CD4-positive, alpha-beta memory T cell (primary cell): ENCODE measurements at regions of chr6 and their contacts with region 1.

Region 1: DNA sequence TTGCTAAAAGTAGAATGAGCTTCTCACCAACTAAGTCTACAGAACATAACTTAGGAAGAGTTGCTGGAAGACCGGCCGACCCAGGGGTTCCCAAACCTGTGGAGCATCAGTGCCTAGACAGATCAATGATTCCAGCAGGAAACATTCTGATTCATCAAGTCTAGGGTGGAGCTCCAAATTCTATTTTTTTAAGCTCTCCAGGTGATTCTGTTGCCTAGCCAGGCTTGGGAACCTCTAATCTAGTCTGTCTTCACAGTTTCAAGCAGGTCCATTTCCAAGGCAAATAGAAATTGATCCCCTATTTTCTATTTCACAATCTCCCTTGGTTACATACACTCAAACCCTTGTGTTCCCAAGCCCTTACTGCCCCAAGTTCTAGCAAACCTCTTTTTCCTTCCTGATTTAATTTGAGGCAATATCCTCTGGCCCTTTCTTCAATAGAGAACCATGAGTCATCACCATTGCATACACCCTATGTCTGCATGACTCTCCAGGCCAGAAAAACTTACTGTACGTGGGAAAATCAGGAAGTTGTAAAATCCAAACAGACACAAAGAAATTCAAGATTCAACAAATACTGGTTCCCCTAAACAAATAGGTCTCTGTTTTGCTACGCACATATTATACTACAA is 8.9 kb downstream of the ATXN1 start:
- DNase-seq: no peak
- H3K4me3 ChIP-seq: no peak overlapping the region
- H3K4me3 Mint-ChIP-seq: no peak overlapping the region
- H3K27ac ChIP-seq: no peak overlapping the region
- H3K27ac Mint-ChIP-seq: no peak overlapping the region
- H3K4me1 ChIP-seq: peaks cover 80% of the 10 kb centered on the region
- H3K4me1 Mint-ChIP-seq: peaks cover 60 to 89% (median 71%) of the 10 kb centered on the region in 4 donors
- H3K27me3 ChIP-seq: no peaks in the 10 kb centered on the region
- H3K27me3 Mint-ChIP-seq: no peaks in the 10 kb centered on the region

Region 2: GRCh38 chr6:16108921-16109658 is 643.3 kb before region 1 on chr6:
- CTCF ChIA-PET with region 1: no interaction called
- POLR2A ChIA-PET with region 1: no interaction called
- intact Hi-C with region 1: no loop called
- DNase-seq: no peak
- H3K4me3 ChIP-seq: no peak overlapping the region
- H3K4me3 Mint-ChIP-seq: no peak overlapping the region
- H3K27ac ChIP-seq: no peak overlapping the region
- H3K27ac Mint-ChIP-seq: no peak overlapping the region
- H3K4me1 ChIP-seq: no peaks in the 10 kb centered on the region
- H3K4me1 Mint-ChIP-seq: no peaks in the 10 kb centered on the region
- H3K27me3 ChIP-seq: no peaks in the 10 kb centered on the region
- H3K27me3 Mint-ChIP-seq: peaks cover 2 to 9% of the 10 kb centered on the region in 2 donors

Region 3: GRCh38 chr6:16741112-16742016 is 11.0 kb before region 1 on chr6:
- CTCF ChIA-PET with region 1: interaction called, 14 read pairs
- POLR2A ChIA-PET with region 1: interaction called, 35 read pairs
- intact Hi-C with region 1: no loop called
- DNase-seq: no peak
- H3K4me3 ChIP-seq: no peak overlapping the region
- H3K4me3 Mint-ChIP-seq: peak overlapping the region in 2 of 8 donors; percentile 20 to 23
- H3K27ac ChIP-seq: no peak overlapping the region
- H3K27ac Mint-ChIP-seq: peak overlapping the region; percentile 19 to 90 (median 52)
- H3K4me1 ChIP-seq: peaks cover 72% of the 10 kb centered on the region
- H3K4me1 Mint-ChIP-seq: peaks cover 57 to 97% (median 78%) of the 10 kb centered on the region in 4 donors
- H3K27me3 ChIP-seq: no peaks in the 10 kb centered on the region
- H3K27me3 Mint-ChIP-seq: no peaks in the 10 kb centered on the region